Colonic mucosa (tissue), 4 donors: ENCODE measurements at regions of chr7 and their contacts with region 1.

Region 1: GRCh38 chr7:128135515-128136214 is 104.4 kb upstream of the LRRC4 start:
- DNase-seq: peak; percentile 46
- H3K4me3 ChIP-seq: peak overlapping the region; percentile 43
- H3K27ac ChIP-seq: no peak overlapping the region
- H3K4me1 ChIP-seq: peaks cover 5% of the 10 kb centered on the region
- H3K27me3 ChIP-seq: peaks cover 40% of the 10 kb centered on the region
- CTCF ChIP-seq: peak; percentile 84

Region 2: GRCh38 chr7:127447326-127447945 is 688.2 kb before region 1 on chr7:
- intact Hi-C with region 1: no loop called
- DNase-seq: no peak
- H3K4me3 ChIP-seq: no peak overlapping the region
- H3K27ac ChIP-seq: no peak overlapping the region
- H3K4me1 ChIP-seq: no peaks in the 10 kb centered on the region
- H3K27me3 ChIP-seq: no peaks in the 10 kb centered on the region
- CTCF ChIP-seq: peak; percentile 48

Region 3: GRCh38 chr7:127708788-127709187 is 426.9 kb before region 1 on chr7:
- intact Hi-C with region 1: loop called (anchors 10 kb)
- DNase-seq: peak; percentile 79
- H3K4me3 ChIP-seq: no peak overlapping the region
- H3K27ac ChIP-seq: no peak overlapping the region
- H3K4me1 ChIP-seq: no peaks in the 10 kb centered on the region
- H3K27me3 ChIP-seq: no peaks in the 10 kb centered on the region
- CTCF ChIP-seq: peak; percentile 69

Region 4: GRCh38 chr7:127949705-127950583 is 185.7 kb before region 1 on chr7:
- intact Hi-C with region 1: no loop called
- DNase-seq: no peak
- H3K4me3 ChIP-seq: no peak overlapping the region
- H3K27ac ChIP-seq: no peak overlapping the region
- H3K4me1 ChIP-seq: no peaks in the 10 kb centered on the region
- H3K27me3 ChIP-seq: no peaks in the 10 kb centered on the region
- CTCF ChIP-seq: no peak